HCT116 (cell line): ENCODE measurements at regions of chr17 and their contacts with region 1.

Region 1: GRCh38 chr17:51640108-51640622 is 379.8 kb downstream of the UTP18 start:
- DNase-seq: peak; percentile 22
- ATAC-seq: peak; percentile 84
- H3K4me3 ChIP-seq: no peak overlapping the region
- H3K27ac ChIP-seq: no peak overlapping the region
- H3K4me1 ChIP-seq: no peaks in the 10 kb centered on the region
- H3K27me3 ChIP-seq: peaks cover 40% of the 10 kb centered on the region
- CTCF ChIP-seq: peak; percentile 60 to 81 (median 75); a peak in 5 of 6 replicates
- POLR2A ChIP-seq: no peak
- RAD21 ChIP-seq: peak; percentile 57

Region 2: GRCh38 chr17:51298508-51299371 is 341.4 kb before region 1 on chr17:
- CTCF ChIA-PET with region 1: interaction called, 15 read pairs
- POLR2A ChIA-PET with region 1: no interaction called
- RAD21 ChIA-PET with region 1: no interaction called
- intact Hi-C with region 1: no loop called
- DNase-seq: peak; percentile 51
- ATAC-seq: peak; percentile 86
- H3K4me3 ChIP-seq: no peak overlapping the region
- H3K27ac ChIP-seq: no peak overlapping the region
- H3K4me1 ChIP-seq: no peaks in the 10 kb centered on the region
- H3K27me3 ChIP-seq: no peaks in the 10 kb centered on the region
- CTCF ChIP-seq: peak; percentile 67 to 96 (median 86); a peak in 5 of 6 replicates
- POLR2A ChIP-seq: no peak
- RAD21 ChIP-seq: peak; percentile 71

Region 3: GRCh38 chr17:51461578-51462004 is 178.6 kb before region 1 on chr17:
- CTCF ChIA-PET with region 1: interaction called, 15 read pairs
- POLR2A ChIA-PET with region 1: no interaction called
- RAD21 ChIA-PET with region 1: no interaction called
- intact Hi-C with region 1: loop called (anchors 1 kb)
- DNase-seq: peak; percentile 78
- ATAC-seq: peak; percentile 97
- H3K4me3 ChIP-seq: no peak overlapping the region
- H3K27ac ChIP-seq: no peak overlapping the region
- H3K4me1 ChIP-seq: peaks cover 0 to 4% of the 10 kb centered on the region in 2 experiments; a peak in 1 of 4 replicates
- H3K27me3 ChIP-seq: peaks cover 16% of the 10 kb centered on the region
- CTCF ChIP-seq: peak; percentile 63 to 100 (median 100); a peak in 5 of 6 replicates
- POLR2A ChIP-seq: no peak
- RAD21 ChIP-seq: peak; percentile 72

Region 4: GRCh38 chr17:51585514-51586104 is 54.6 kb before region 1 on chr17:
- CTCF ChIA-PET with region 1: interaction called, 3 read pairs
- POLR2A ChIA-PET with region 1: no interaction called
- RAD21 ChIA-PET with region 1: no interaction called
- intact Hi-C with region 1: loop called (anchors 2 kb)
- DNase-seq: peak; percentile 18
- ATAC-seq: peak; percentile 85
- H3K4me3 ChIP-seq: no peak overlapping the region
- H3K27ac ChIP-seq: no peak overlapping the region
- H3K4me1 ChIP-seq: no peaks in the 10 kb centered on the region
- H3K27me3 ChIP-seq: peaks cover 7% of the 10 kb centered on the region
- CTCF ChIP-seq: peak; percentile 41 to 79 (median 74); a peak in 5 of 6 replicates
- POLR2A ChIP-seq: no peak
- RAD21 ChIP-seq: peak; percentile 66

Region 5: GRCh38 chr17:51611585-51611984 is 28.6 kb before region 1 on chr17:
- CTCF ChIA-PET with region 1: no interaction called
- POLR2A ChIA-PET with region 1: no interaction called
- RAD21 ChIA-PET with region 1: no interaction called
- intact Hi-C with region 1: no loop called
- DNase-seq: no peak
- ATAC-seq: no peak
- H3K4me3 ChIP-seq: no peak overlapping the region
- H3K27ac ChIP-seq: no peak overlapping the region
- H3K4me1 ChIP-seq: peaks cover 0 to 3% of the 10 kb centered on the region in 2 experiments; a peak in 1 of 4 replicates
- H3K27me3 ChIP-seq: peaks cover 18% of the 10 kb centered on the region; the same call in 1 of the 2 replicates
- CTCF ChIP-seq: no peak
- POLR2A ChIP-seq: no peak
- RAD21 ChIP-seq: no peak

Region 6: DNA sequence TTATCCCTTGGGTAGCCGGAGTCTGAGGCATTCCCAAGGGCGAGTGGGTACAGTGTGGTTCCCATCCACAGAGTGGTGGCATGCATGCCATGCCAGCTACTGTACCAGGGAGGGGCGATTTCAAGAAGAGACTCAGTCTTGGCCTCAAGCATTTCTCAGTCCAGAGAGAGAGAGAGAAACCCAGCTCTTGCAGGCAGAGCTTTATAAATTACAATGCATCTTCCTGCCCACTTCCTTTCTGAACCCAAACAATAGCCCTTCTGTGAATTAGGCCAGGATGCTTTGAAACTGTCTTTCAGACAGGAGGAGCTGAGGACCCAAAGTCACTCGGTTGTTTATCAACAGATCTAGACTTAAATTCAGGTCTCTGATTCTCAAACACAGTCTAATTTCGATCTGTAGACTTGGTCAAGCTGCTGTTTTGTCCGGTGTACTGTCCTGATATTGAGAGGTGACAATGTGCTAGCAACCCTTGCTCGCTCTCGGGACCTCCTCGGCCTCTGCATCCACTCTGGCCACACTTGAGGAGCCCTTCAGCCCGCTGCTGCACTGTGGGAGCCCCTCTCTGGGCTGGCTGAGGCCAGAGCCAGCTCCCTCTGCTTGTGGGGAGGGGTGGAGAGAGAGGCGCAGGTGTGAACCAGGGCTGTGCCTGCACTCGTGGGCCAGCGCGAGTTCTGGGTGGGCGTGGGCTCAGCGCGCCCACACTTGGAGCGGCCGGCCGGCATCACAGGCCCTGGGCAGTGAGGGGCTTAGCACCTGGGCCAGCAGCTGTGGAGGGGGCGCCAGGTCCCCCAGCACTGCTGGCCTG is 28.2 kb after region 1 on chr17:
- CTCF ChIA-PET with region 1: no interaction called
- POLR2A ChIA-PET with region 1: no interaction called
- RAD21 ChIA-PET with region 1: no interaction called
- intact Hi-C with region 1: no loop called
- DNase-seq: no peak
- ATAC-seq: no peak
- H3K4me3 ChIP-seq: no peak overlapping the region
- H3K27ac ChIP-seq: no peak overlapping the region
- H3K4me1 ChIP-seq: no peaks in the 10 kb centered on the region
- H3K27me3 ChIP-seq: peaks cover 47% of the 10 kb centered on the region
- CTCF ChIP-seq: no peak
- POLR2A ChIP-seq: no peak
- RAD21 ChIP-seq: no peak

Region 7: DNA sequence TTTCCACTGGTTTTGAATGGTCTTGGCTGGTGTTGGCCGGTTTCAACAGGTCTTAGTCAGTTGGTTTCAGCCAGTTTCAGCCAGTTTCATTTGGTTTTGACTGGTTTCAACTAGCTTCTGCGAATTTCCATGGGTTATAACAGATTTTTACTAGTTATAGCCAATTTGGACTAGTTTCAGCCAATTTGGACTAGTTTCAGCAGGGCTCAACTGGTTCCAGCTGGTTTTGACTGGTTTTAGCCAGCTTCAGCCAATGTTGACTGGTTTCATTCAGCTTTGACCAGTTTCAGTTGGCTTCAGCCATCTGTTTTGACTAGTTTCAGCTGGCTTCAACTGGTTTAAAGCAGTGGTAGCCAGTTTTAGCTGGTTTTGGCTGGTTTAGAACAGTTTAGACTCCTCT is 52.8 kb after region 1 on chr17:
- CTCF ChIA-PET with region 1: no interaction called
- POLR2A ChIA-PET with region 1: no interaction called
- RAD21 ChIA-PET with region 1: no interaction called
- intact Hi-C with region 1: no loop called
- DNase-seq: no peak
- ATAC-seq: no peak
- H3K4me3 ChIP-seq: no peak overlapping the region
- H3K27ac ChIP-seq: no peak overlapping the region
- H3K4me1 ChIP-seq: no peaks in the 10 kb centered on the region; a peak in 1 of 4 replicates
- H3K27me3 ChIP-seq: no peaks in the 10 kb centered on the region
- CTCF ChIP-seq: no peak
- POLR2A ChIP-seq: no peak
- RAD21 ChIP-seq: no peak